ENCODE measurements at regions of chr19 and their contacts with region 1.

Region 1: GRCh38 chr19:27974082-27974513 is 1238.9 kb downstream of the UQCRFS1 start:
- DNase-seq: peak; percentile 24
- H3K4me3 ChIP-seq: no peak overlapping the region
- H3K27ac ChIP-seq: no peak overlapping the region
- H3K4me1 ChIP-seq: no peaks in the 10 kb centered on the region
- H3K27me3 ChIP-seq: no peaks in the 10 kb centered on the region
- CTCF ChIP-seq: peak; percentile 50

Region 2: DNA sequence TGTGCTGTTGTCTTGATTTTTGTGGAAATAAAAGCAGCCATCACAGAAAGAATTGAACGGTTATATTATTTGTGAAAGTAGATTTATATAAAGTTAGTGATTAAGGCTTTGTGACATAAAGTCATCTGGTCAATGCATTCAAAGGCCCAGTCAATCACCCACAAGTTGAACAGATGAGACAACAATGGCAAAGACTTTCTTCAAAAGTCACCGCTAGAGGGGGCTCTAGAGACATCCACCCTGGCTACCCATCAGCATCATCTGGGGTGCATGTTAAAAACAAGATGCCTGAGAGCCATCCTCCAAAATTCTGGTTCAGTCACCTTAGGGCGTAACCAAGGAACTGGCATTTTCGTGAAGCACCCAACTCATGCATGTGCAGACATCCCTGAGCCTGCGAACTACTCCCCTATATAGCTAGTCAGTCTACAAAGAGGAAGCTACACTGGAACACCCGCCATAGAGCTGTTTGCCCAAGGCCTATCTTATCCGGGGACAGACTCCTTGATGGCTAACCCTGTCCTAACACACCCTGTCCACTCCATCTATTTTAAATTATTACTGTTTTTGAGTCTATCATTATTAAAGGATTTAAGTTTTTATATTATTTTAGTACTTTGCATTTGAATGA is 268.3 kb after region 1 on chr19:
- intact Hi-C with region 1: loop called (anchors 10 kb)
- DNase-seq: peak; percentile 43
- H3K4me3 ChIP-seq: no peak overlapping the region
- H3K27ac ChIP-seq: no peak overlapping the region
- H3K4me1 ChIP-seq: no peaks in the 10 kb centered on the region
- H3K27me3 ChIP-seq: no peaks in the 10 kb centered on the region
- CTCF ChIP-seq: peak; percentile 47

Region 3: GRCh38 chr19:28324275-28325060 is 350.4 kb after region 1 on chr19:
- intact Hi-C with region 1: loop called (anchors 5 kb)
- DNase-seq: no peak
- H3K4me3 ChIP-seq: no peak overlapping the region
- H3K27ac ChIP-seq: no peak overlapping the region
- H3K4me1 ChIP-seq: no peaks in the 10 kb centered on the region
- H3K27me3 ChIP-seq: no peaks in the 10 kb centered on the region
- CTCF ChIP-seq: no peak

Region 4: DNA sequence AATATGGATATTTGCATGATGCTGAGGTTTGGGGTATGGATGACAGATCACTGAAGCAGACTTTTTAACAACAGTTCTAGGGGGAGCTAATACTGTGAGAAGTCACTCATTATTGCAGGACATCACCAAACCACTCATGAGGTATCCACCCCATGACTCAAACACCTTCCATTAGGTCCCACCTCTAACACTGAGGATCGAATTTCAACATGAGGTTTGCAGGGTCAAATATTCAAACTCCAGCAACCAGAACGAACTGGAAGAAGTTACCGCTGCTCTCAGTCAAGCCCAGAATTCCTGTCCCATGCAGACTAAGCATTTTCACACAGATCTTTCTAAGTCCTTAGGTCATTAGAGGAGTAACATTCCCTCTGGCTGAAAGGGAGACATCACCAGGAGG is 480.0 kb after region 1 on chr19:
- intact Hi-C with region 1: loop called (anchors 10 kb)
- DNase-seq: no peak
- H3K4me3 ChIP-seq: no peak overlapping the region
- H3K27ac ChIP-seq: no peak overlapping the region
- H3K4me1 ChIP-seq: no peaks in the 10 kb centered on the region
- H3K27me3 ChIP-seq: no peaks in the 10 kb centered on the region
- CTCF ChIP-seq: no peak

Region 5: GRCh38 chr19:28710278-28710677 is 736.2 kb after region 1 on chr19:
- intact Hi-C with region 1: loop called (anchors 5 kb)
- DNase-seq: no peak
- H3K4me3 ChIP-seq: no peak overlapping the region
- H3K27ac ChIP-seq: no peak overlapping the region
- H3K4me1 ChIP-seq: no peaks in the 10 kb centered on the region
- H3K27me3 ChIP-seq: no peaks in the 10 kb centered on the region
- CTCF ChIP-seq: peak; percentile 62